ENCODE measurements at regions of chr12 and their contacts with region 1.

Region 1: DNA sequence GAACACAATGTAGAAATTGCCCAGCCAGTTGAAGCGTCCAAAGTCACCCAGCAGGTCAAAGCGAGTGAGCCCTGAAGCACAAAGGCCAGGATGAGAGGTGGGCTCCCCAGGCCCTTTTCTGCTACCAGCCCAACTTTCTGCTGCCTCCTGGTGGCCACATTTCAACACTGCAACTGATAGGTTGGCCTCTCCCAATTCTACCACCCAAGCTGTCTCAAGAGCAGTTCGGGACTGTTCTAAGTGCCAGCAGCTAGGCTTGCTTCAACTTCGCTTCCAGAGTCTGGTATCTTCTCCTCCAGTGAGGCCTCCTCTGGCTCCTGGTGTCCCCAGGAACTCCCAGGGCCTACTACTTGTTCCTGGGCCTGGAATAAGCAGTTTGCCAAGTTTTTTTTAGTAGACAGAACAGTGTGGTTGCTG is 3.4 kb upstream of the DHH start:
- DNase-seq: peak; percentile 49
- H3K4me3 ChIP-seq: no peak overlapping the region
- H3K27ac ChIP-seq: no peak overlapping the region
- H3K4me1 ChIP-seq: peaks cover 3% of the 10 kb centered on the region
- H3K27me3 ChIP-seq: peaks cover 16% of the 10 kb centered on the region
- CTCF ChIP-seq: peak; percentile 72

Region 2: DNA sequence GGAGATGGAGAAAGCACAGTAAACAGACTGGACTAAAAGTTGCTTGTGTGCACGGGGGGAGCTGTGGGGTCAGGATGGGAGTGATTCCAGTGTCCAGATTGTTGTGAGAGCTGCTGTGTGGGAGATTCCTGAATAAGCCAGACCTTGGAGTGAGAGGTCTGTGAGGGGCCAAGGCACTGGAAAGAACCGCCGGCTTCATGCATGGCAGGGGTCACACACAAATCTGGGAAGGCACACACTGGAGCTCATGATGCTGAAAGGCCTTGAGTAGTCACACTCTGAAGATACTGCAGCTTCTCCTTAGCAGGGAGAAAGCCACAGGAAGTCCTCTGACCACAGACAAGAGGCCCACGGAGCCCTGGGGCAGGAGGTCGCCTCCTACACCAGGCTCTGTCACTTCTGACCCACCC is 332.3 kb before region 1 on chr12:
- intact Hi-C with region 1: no loop called
- DNase-seq: no peak
- H3K4me3 ChIP-seq: no peak overlapping the region
- H3K27ac ChIP-seq: peak overlapping the region; percentile 21
- H3K4me1 ChIP-seq: no peaks in the 10 kb centered on the region
- H3K27me3 ChIP-seq: no peaks in the 10 kb centered on the region
- CTCF ChIP-seq: no peak

Region 3: DNA sequence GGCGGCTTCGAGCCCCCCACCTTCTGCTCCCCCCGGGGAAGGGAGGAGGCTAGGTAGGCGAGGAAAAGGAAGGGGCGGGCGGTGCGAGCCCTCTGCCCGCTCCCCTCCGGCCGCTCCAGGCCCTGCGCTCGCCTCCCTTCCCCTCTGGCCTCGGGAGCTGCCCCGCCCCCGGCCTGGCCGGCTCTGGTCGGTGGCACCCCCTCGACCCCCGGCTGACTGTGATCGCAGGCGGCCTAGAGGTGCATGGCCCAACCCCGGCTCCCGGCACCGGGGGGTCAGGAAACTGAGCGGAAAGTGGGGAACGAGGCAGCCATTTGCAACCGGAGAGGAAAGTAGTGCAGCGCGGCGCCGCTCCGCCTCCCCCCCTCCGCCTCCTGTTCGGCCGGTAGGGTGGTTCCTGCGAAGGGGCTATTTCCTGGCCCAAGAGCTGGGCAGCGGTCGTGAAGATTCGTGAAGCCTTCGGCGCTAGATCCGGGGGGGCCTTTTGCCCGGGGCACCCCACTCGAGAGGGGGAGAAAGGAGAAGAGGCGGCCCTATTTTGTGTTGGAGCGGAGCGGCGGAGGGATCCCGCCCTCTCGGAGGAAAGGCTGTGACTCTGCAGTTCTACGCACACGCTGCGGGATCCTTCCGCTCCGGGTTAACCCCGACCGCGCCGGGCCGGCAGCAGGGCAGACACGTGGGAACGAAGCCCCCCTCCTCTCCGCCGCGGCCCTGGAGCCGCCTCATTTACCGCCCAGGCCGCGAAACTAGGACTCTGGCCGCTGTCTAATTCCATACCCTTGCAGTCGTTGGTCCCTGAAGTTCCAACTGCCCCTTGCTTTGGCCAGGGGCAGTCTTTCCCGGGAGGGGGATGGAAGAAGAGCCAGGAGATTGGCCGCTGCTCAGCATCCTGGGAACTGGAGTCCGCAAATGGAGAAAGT is 37.5 kb before region 1 on chr12 and contains the start of gene KMT2D:
- intact Hi-C with region 1: loop called (anchors 5 kb)
- DNase-seq: peak; percentile 93
- H3K4me3 ChIP-seq: peak within 1 kb of the TSS; percentile 91
- H3K27ac ChIP-seq: peak within 1 kb of the TSS; percentile 94
- H3K4me1 ChIP-seq: peaks cover 22% of the 10 kb centered on the region
- H3K27me3 ChIP-seq: no peaks in the 10 kb centered on the region
- CTCF ChIP-seq: peak; percentile 12
- total RNA-seq, gene KMT2D: 50.2 to 87.5 TPM

Region 4: GRCh38 chr12:49232940-49233841 is 135.1 kb after region 1 on chr12:
- intact Hi-C with region 1: no loop called
- DNase-seq: peak; percentile 33
- H3K4me3 ChIP-seq: no peak overlapping the region
- H3K27ac ChIP-seq: peak overlapping the region; percentile 85
- H3K4me1 ChIP-seq: no peaks in the 10 kb centered on the region
- H3K27me3 ChIP-seq: no peaks in the 10 kb centered on the region
- CTCF ChIP-seq: no peak

Region 5: DNA sequence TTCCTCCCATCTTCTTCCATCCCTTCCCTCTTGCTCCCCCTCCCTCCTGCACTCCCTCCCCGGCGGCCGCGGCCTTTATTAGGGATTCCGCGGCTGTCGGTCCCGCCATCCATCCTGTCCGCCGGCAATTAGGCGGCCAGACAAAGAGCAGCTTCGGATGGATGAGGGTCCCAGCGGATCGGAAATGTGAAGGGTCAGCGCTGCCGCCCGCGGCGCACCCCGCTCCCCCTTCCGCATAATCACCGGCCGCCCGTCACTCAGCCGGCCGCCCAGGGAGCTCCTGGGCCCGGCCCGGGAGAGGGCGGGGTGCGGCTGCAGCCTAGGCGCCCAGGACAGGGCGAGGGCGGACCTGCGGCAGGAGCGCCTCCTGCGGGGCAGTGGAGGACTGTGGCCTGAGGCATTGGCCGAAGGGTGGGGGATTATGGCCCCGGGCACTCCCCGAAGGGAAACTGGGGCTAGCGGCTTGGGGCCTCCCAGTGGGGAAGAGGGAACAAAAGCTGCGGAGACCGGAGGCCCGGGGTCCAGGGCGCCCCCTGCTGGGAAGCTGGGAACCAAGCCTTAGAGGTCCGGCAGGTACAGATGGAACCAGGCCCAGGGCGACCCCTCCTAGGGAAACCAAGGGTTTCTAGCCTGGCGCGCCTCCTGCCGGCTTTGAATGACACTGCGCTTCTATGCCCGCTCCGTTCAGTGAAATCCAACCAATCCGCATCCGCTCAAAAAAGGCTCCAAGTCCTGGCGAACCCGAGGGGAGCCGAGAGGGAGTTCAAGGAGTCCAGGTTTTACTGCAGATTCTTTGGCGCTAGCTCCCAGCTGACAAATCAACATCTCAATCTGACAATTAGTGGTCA is 244.2 kb after region 1 on chr12:
- intact Hi-C with region 1: no loop called
- DNase-seq: peak; percentile 90
- H3K4me3 ChIP-seq: peak overlapping the region; percentile 48
- H3K27ac ChIP-seq: no peak overlapping the region
- H3K4me1 ChIP-seq: peaks cover 36% of the 10 kb centered on the region
- H3K27me3 ChIP-seq: peaks cover 54% of the 10 kb centered on the region
- CTCF ChIP-seq: peak; percentile 85